ENCODE measurements at regions of chr10 and their contacts with region 1.

Region 1: GRCh38 chr10:75283078-75283670 is 47.4 kb upstream of the COMTD1 start:
- DNase-seq: no peak
- H3K4me3 ChIP-seq: no peak overlapping the region
- H3K27ac ChIP-seq: no peak overlapping the region
- H3K4me1 ChIP-seq: no peaks in the 10 kb centered on the region; a peak in 1 of 4 replicates
- H3K27me3 ChIP-seq: peaks cover 11% of the 10 kb centered on the region; the same call in 1 of the 2 replicates
- CTCF ChIP-seq: no peak
- EP300 ChIP-seq: no peak
- RAD21 ChIP-seq: no peak

Region 2: GRCh38 chr10:75294866-75295701 is 11.9 kb after region 1 on chr10:
- CTCF ChIA-PET with region 1: interaction called, 10 read pairs
- POLR2A ChIA-PET with region 1: no interaction called
- DNase-seq: peak; percentile 85
- H3K4me3 ChIP-seq: peak overlapping the region; percentile 56 to 65
- H3K27ac ChIP-seq: peak overlapping the region; percentile 39 to 60; a peak in 3 of 4 replicates
- H3K4me1 ChIP-seq: peaks cover 5 to 19% of the 10 kb centered on the region in 2 experiments; a peak in 3 of 4 replicates
- H3K27me3 ChIP-seq: no peaks in the 10 kb centered on the region
- CTCF ChIP-seq: peak; percentile 19
- EP300 ChIP-seq: peak in 1 of 2 experiments; percentile 42; a peak in 2 of 4 replicates
- RAD21 ChIP-seq: 0 out of 2 replicates have a peak, but pooled peaks have one; percentile 19